Mammary epithelial cell (primary cell): ENCODE measurements at regions of chr2 and their contacts with region 1.

Region 1: DNA sequence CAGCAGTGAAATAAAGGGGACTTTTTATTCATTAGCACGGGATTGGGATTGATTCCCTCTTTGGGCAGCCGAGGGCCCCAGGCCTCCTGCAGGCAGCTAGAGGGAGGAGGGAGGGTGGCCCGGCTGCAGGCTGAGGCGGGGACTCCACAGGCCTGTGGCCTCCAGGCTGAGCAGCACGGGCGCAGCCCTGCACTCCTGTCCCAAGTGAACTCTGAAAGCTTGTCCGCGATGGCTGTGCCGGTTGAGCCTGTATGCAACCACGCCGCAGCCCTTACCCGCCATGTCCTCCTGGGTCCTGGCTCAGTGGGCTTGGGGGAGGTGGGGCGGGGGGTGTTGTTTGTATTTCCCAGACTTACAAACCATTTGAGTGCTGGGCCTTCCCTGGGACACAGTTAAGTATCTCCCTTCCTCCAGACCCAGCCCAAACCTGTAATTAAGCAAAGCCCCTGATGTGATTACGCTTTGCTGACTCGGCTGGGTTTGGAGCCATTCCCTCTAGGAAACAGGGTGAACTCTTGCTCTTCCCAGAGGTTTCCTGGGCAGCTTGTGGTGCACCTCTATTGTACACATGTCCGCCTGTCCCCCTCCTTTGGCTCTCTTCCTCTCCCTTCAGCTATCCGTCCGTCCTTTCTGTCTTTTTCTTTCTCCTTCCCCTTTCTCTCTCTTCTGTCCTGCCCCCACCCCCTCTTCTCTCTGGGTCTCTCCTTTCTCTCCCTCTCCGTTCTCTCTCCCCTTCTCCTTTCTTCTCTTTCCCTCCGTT is 5.3 kb downstream of the GLI2 start:
- DNase-seq: no peak
- H3K4me3 ChIP-seq: no peak overlapping the region
- H3K27ac ChIP-seq: no peak overlapping the region
- H3K4me1 ChIP-seq: peaks cover 17% of the 10 kb centered on the region
- H3K27me3 ChIP-seq: peaks cover 54% of the 10 kb centered on the region
- CTCF ChIP-seq: no peak

Region 2: GRCh38 chr2:120779781-120780283 is 38.9 kb after region 1 on chr2:
- CTCF ChIA-PET with region 1: no interaction called
- dilution Hi-C with region 1: loop called (anchors 5 kb)
- in situ Hi-C with region 1: no loop called
- intact Hi-C with region 1: no loop called
- DNase-seq: peak; percentile 14
- H3K4me3 ChIP-seq: no peak overlapping the region
- H3K27ac ChIP-seq: no peak overlapping the region
- H3K4me1 ChIP-seq: no peaks in the 10 kb centered on the region
- H3K27me3 ChIP-seq: no peaks in the 10 kb centered on the region
- CTCF ChIP-seq: no peak

Region 3: GRCh38 chr2:120983344-120983743 is 242.4 kb after region 1 on chr2:
- CTCF ChIA-PET with region 1: no interaction called
- dilution Hi-C with region 1: no loop called
- in situ Hi-C with region 1: no loop called
- intact Hi-C with region 1: no loop called
- DNase-seq: peak; percentile 6
- H3K4me3 ChIP-seq: no peak overlapping the region
- H3K27ac ChIP-seq: no peak overlapping the region
- H3K4me1 ChIP-seq: no peaks in the 10 kb centered on the region
- H3K27me3 ChIP-seq: peaks cover 3% of the 10 kb centered on the region
- CTCF ChIP-seq: no peak

Region 4: DNA sequence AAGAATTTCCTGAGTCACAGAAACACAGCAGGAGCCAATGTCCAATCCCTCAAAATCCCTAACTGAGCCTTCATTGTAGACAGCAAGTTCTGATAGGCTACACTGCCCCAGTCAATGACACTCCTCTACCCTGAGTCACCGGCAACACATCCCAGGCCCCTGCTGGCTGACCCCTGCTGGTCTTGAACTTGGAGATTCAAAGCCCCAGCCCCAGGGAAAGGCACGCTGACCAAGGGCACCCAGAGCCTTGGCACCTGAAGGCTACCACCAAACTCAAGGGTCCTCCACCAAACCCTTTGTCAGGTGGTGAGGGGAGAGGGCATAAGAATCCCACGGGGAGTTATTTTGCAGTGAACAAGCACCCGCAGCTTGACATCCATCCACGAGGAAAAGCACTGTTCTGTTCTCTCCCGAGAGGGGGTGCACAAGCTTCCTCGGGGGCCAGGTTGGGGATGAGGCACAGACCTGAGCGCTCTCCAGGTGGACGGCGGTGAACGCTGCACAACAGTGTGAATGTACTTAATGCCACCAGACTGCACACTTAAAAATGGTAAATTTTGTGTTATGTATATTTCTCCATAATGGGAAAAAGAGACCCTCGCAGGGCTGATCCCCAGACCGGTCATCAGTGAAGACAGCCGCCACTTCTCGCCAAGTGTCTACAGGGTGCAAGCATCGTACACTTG is 497.2 kb after region 1 on chr2:
- CTCF ChIA-PET with region 1: no interaction called
- dilution Hi-C with region 1: no loop called
- in situ Hi-C with region 1: no loop called
- intact Hi-C with region 1: no loop called
- DNase-seq: no peak
- H3K4me3 ChIP-seq: no peak overlapping the region
- H3K27ac ChIP-seq: no peak overlapping the region
- H3K4me1 ChIP-seq: peaks cover 4% of the 10 kb centered on the region
- H3K27me3 ChIP-seq: no peaks in the 10 kb centered on the region
- CTCF ChIP-seq: no peak